ENCODE measurements at regions of chr11 and their contacts with region 1.

Region 1: DNA sequence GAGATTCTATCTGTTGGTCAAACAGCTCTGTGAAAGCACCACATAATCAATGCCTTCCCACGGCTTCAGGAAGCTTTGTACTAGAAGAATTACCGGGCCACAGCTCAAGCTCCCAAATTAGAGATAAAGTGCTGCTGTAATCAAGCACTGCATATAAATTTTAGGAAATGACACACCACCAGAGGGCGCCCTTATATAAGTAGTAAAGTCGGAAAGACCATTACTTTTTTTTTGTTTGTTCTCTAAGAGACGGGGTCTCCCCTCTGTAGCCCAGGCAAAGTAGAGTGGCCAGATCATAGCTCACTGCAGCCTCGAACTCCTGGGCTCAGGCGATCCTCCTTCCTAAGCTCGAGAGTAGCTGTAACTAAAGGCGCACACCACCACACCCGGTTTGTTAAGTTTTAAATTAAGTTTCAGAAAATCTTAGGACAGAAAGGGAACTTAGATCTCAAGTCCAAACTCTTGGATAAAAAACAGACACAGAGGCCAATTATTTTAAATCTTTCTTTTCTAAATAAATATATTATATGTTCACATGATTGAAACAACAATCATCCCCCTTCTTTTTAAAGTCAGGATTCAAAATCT is 32.6 kb downstream of the PRCP start:
- DNase-seq: peak; percentile 84
- H3K4me3 ChIP-seq: no peak overlapping the region
- H3K27ac ChIP-seq: no peak overlapping the region
- H3K4me1 ChIP-seq: no peaks in the 10 kb centered on the region
- H3K27me3 ChIP-seq: no peaks in the 10 kb centered on the region
- CTCF ChIP-seq: peak; percentile 49 to 77 (median 66)
- POLR2A ChIP-seq: no peak

Region 2: GRCh38 chr11:82823647-82824619 is 43.7 kb before region 1 on chr11:
- intact Hi-C with region 1: no loop called
- DNase-seq: no peak
- H3K4me3 ChIP-seq: no peak overlapping the region
- H3K27ac ChIP-seq: no peak overlapping the region
- H3K4me1 ChIP-seq: no peaks in the 10 kb centered on the region
- H3K27me3 ChIP-seq: no peaks in the 10 kb centered on the region
- CTCF ChIP-seq: no peak
- POLR2A ChIP-seq: no peak

Region 3: GRCh38 chr11:83257761-83258168 is 390.2 kb after region 1 on chr11:
- intact Hi-C with region 1: loop called (anchors 5 kb)
- DNase-seq: no peak
- H3K4me3 ChIP-seq: no peak overlapping the region
- H3K27ac ChIP-seq: no peak overlapping the region
- H3K4me1 ChIP-seq: no peaks in the 10 kb centered on the region
- H3K27me3 ChIP-seq: no peaks in the 10 kb centered on the region
- CTCF ChIP-seq: no peak
- POLR2A ChIP-seq: no peak

Measured in prostate gland (tissue), 2 donors.